ENCODE measurements at regions of chr9 and their contacts with region 1.

Region 1: DNA sequence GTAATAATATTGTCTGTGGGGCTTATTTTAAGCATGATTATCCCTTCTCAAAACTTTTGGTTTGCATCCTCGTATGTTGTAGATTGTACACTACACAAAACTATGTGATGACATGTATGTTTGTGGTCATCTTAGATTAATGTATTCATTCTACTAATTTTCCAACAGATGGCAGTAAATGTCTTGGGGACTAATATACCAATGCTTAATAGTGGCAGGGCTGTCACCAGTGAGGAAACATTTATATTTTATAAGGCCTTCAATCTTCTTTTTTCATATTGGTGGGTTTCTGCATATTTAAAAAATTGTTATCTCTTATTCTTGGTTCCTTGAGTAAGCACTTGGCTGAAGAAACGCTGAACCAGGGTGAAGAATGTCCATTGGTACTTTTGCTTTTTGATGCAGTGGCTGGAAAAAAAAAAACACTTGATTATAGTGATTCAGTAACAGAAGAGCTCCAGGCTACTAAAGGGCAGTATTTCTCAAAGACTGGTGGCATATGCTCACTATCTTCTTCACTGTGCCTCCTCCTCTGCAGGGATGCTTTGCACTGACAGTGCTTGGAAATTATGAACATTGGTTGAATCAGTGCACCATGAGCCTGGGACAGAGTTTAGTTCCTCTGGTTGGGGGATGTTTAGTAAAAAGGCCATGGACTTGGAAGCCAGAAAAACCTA is 530.3 kb downstream of the RASEF start:
- DNase-seq: no peak

Region 2: DNA sequence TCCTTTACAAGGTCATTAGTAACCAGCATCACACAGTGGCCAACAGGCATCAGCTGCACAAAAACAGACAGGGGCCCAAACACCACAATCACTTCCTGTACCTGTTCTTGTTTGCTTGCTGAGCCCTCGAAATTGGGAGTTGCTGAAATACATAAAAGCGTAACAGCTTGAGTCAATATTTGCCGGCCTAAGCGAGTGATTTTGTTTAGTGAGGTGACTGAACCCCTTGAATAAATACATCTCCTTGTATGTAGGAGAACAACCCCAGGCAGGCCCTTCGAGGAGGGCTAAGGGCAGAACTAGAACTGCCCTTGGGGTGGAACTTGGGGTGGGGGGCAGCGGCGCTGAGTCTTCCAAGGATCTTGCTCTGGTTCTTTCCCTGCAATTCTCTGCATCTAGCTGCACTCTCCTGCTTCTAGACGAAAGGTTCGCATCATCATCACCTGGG is 27.8 kb after region 1 on chr9:
- intact Hi-C with region 1: no loop called
- DNase-seq: no peak

Region 3: DNA sequence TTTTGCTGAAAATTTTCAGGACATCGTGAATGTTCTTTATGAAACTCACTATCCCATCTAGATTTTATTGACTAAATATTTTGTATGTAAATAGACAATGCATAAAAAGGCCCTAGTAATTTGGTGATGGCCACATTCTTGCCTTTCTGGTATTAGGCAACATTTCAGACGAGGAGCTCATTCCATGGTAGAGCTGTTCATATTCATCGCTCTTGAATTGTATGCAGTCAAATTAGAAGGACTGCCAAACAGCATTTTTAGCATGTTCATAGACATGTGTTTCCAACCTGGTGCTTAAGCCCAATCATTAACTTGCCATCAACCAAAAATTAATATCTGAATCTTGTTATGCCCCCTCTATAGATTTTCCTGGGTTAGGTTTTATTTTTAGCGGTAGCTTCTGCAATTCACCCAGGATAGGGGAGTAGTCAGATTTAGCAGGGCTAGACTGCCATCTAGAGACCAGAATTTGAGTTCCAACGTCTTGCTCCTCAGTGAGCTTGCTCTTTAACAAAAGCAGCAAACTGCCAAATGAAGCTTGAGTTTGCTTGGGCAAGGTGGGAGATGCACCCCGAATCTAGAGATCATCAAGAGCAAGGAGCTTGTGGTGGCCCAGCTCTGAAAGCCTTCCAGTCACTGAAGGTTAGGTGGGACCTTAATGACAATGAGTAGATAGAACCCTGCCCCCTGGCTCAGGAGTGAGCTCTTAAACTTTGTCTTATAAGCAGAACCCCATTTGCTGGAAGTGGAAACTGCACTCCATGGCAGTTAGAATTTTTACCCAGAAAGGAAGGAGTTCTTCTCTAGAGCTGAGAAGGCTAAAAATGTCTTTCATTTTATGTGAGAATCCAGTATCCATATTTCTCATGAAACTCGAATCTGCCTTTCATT is 74.1 kb after region 1 on chr9:
- intact Hi-C with region 1: loop called (anchors 5 kb)
- DNase-seq: no peak

Region 4: DNA sequence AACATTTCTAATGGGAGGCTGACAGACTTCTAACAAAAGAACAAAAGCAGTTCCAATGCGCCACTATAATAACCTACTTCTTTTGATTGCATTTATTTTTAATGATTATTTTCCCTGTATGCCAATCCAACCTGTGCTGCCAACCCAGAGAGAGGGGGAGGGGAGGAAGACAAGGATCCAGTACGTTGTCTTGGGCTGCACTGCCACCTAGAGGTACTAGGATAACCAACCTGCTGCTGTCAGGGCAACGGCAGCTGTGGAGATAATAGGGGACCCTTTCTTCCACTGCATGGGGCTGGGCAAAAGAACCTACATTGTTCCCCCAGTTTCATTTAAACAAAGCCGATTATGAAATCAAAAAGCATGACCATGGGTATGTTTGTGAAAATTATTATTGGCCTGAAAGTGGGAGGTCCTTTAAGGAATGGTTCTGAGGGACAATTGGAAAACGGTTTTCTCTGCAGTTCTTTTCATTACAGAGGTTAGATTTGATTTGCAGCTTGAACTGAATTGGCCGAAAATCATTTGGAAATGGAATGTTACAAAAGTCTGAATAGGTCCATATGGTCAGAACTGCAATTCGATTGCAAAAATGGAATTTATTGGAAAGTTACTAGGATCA is 429.0 kb after region 1 on chr9:
- intact Hi-C with region 1: loop called (anchors 10 kb)
- DNase-seq: no peak